Activated T-helper 1 cell treated with anti-CD3 and anti-CD28 coated beads, Interleukin-12 subunit alpha, Interleukin-12 subunit beta, Interleukin-2, Interleukin-4 antibody, amounts not matched to agents 30 ng/mL and 10 ng/mL and 1 ng/mL, durations not matched to agents 14 hours and 24 hours and 36 hours (primary cell): ENCODE measurements at regions of chr15 and their contacts with region 1.

Region 1: DNA sequence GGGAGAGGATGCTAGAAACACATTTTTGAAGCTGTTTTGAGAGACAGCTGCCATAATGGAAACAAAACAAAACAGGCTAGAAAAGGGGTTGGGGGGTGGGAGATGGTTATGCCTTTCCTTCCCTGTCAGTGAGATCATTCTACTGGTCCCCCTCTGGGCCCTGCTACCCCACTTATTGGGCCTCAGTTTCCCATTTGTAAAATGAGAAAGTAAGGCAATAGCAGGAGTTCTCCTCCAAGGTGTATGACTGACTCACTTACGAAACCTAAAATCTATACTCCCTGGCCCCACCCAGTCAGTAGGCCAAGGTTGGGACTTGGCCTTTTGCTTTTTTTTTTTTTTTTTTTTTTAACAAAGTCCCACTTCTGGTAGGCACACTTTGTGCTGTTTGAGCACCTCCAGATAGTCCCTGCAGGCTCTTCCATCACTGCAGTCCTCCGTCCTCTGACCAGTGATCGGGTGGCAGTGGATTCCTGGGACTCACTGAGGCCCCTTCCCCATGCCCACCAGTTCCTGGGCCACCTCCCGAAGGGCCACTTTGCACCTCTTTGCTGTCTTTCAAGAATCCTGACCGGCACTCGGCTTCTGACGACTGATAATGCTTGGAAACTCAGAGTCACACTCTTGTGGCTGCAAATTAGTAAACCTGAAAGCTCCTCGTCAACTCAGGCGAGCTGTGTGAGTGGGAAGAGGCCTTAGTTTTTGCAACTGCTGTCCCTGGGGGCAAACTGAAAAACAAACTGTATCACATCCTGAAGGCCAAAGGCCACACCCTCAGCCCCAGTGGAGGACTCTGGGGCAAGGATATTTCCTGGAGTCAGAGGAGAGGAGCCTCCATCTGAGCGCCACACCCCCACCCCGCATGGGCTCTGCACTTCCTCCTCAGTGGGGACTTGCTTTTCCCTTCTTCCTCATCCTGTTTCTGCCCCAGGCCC is 6.7 kb upstream of the PSTPIP1 start:
- DNase-seq: peak; percentile 76
- H3K4me3 Mint-ChIP-seq: peak overlapping the region; percentile 73
- H3K27ac Mint-ChIP-seq: peak overlapping the region; percentile 99
- H3K4me1 Mint-ChIP-seq: peaks cover 90% of the 10 kb centered on the region
- H3K27me3 Mint-ChIP-seq: no peaks in the 10 kb centered on the region

Region 2: GRCh38 chr15:76791511-76791910 is 196.7 kb before region 1 on chr15:
- intact Hi-C with region 1: no loop called
- DNase-seq: no peak
- H3K4me3 Mint-ChIP-seq: no peak overlapping the region
- H3K27ac Mint-ChIP-seq: no peak overlapping the region
- H3K4me1 Mint-ChIP-seq: no peaks in the 10 kb centered on the region
- H3K27me3 Mint-ChIP-seq: no peaks in the 10 kb centered on the region

Region 3: GRCh38 chr15:76905013-76905839 is 83.0 kb before region 1 on chr15 and contains the start of gene SCAPER:
- intact Hi-C with region 1: loop called (anchors 2 kb)
- DNase-seq: peak; percentile 88
- H3K4me3 Mint-ChIP-seq: peak within 1 kb of the TSS; percentile 91
- H3K27ac Mint-ChIP-seq: peak within 1 kb of the TSS; percentile 93
- H3K4me1 Mint-ChIP-seq: peaks cover 36% of the 10 kb centered on the region
- H3K27me3 Mint-ChIP-seq: peaks cover 4% of the 10 kb centered on the region
- total RNA-seq, gene SCAPER: 21.5 and 23.5 TPM in 2 replicates

Region 4: DNA sequence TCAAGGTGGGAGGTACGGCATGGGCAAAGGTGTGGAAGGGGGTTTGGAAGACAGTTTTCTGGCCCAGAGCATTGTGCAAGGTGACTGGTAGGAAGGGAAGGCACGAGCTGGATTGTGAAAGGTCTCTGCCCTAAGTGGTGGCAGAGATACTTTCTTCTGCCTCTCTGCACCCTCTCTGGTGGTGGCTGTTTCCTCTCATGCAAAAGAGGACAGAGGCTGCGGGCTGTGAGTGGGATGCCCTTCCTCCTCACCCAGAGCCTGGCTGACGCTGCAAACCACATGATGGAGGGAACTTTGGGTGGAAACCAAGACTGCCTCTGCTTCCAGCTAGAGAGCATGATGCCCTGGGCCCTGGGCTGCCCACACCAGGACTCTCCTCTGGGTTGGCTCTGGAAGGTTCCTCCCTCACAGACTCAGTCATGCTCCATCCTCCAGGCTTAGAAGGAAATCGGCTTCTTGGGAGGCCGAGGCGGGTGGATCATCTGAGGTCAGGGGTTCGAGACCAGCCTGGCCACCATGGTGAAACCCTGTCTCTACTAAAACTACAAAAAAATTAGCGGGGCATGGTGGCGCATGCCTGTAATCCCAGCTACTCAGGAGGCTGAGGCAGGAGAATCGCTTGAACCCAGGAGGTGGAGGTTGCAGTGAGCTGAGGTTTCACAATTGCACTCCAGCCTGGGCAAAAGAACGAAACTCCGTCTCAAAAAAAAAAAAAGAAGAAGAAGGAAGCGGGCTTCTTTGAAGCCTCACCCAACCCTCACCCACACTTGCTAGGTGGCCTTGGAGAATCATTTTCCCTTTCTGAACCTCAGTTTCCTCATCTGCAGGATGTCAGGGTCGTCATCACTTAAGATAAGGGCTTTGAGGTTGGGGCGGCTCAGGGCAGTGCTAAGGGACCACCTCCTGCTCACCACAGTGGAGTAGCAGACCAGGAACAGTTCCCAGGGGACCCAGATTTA is 15.0 kb after region 1 on chr15:
- intact Hi-C with region 1: loop called (anchors 1 kb)
- DNase-seq: peak; percentile 74
- H3K4me3 Mint-ChIP-seq: peak overlapping the region; percentile 80
- H3K27ac Mint-ChIP-seq: peak overlapping the region; percentile 96
- H3K4me1 Mint-ChIP-seq: peaks cover 86% of the 10 kb centered on the region
- H3K27me3 Mint-ChIP-seq: no peaks in the 10 kb centered on the region

Region 5: GRCh38 chr15:77070495-77071304 is 82.5 kb after region 1 on chr15 and contains the start of gene TSPAN3:
- intact Hi-C with region 1: loop called (anchors 1 kb)
- DNase-seq: peak; percentile 91
- H3K4me3 Mint-ChIP-seq: peak within 1 kb of the TSS; percentile 87
- H3K27ac Mint-ChIP-seq: peak within 1 kb of the TSS; percentile 42
- H3K4me1 Mint-ChIP-seq: peaks cover 27% of the 10 kb centered on the region
- H3K27me3 Mint-ChIP-seq: peaks cover 19% of the 10 kb centered on the region
- total RNA-seq, gene TSPAN3: 41.5 and 41.6 TPM in 2 replicates